Colonic mucosa (tissue), 4 donors: ENCODE measurements at regions of chr22 and their contacts with region 1.

Region 1: DNA sequence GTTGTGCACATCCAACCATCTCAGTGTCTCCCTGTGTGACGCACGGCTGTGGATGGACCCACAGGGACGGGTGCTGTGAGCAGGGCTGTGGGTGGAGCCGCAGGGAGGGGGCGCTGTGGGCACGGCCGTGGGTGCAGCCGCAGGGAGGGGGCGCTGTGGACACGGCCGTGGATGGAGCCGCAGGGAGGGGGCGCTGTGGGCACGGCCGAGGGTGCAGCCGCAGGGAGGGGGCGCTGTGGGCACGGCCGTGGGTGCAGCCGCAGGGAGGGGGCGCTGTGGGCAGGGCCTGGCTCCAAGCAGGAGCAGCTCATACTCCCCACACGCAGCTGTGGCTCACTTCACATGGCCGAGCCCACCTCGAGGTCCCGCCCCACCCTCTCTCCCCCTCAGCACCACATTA is 6.0 kb upstream of the MAPK11 start:
- DNase-seq: peak; percentile 74
- H3K4me3 ChIP-seq: no peak overlapping the region
- H3K27ac ChIP-seq: no peak overlapping the region
- H3K4me1 ChIP-seq: peaks cover 8% of the 10 kb centered on the region
- H3K27me3 ChIP-seq: peaks cover 8% of the 10 kb centered on the region
- CTCF ChIP-seq: peak; percentile 71

Region 2: DNA sequence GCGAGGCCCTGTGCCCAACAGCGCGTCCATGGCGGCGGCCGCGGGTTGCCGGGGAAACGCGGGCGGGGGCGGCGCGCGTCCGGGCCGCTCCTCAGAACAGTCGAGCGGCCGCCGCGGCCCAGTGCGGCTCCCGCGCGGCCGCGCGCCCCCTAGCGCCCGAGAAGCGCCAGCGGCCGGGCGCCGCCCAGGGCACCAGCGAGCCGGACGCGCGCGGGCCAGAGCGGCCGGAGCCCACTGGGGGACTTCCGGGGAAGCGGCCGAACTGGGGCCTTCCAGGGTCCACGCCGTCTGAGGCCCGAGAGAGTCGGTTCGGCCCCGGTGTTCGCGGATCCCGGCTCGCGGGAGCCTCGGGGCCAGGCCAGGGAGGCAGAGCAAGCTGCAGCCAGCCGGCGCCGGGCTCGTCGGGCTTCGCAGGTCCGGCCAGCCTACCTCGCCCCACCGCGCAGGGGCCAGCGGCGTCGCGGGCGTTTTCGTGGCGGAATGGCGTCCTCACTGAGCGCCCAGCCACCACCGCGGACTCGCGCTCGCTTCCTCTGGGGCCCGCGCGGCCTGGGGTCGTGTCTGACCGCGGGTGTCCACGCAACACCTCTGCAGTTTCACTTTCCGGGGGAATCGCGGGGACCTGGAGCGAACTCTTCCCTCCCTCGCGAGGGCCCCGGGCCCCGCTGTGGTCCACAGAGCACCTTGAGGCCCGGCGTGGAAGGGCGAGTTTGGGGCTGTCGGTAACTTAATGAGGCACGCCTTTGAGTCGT is 51.0 kb after region 1 on chr22 and contains the start of gene DENND6B:
- intact Hi-C with region 1: loop called (anchors 2 kb)
- DNase-seq: peak; percentile 80
- H3K4me3 ChIP-seq: peak within 1 kb of the TSS; percentile 73
- H3K27ac ChIP-seq: peak within 1 kb of the TSS; percentile 87
- H3K4me1 ChIP-seq: peaks cover 3% of the 10 kb centered on the region
- H3K27me3 ChIP-seq: no peaks in the 10 kb centered on the region
- CTCF ChIP-seq: peak; percentile 41
- total RNA-seq, gene DENND6B: 2.4 to 4.0 TPM

Region 3: DNA sequence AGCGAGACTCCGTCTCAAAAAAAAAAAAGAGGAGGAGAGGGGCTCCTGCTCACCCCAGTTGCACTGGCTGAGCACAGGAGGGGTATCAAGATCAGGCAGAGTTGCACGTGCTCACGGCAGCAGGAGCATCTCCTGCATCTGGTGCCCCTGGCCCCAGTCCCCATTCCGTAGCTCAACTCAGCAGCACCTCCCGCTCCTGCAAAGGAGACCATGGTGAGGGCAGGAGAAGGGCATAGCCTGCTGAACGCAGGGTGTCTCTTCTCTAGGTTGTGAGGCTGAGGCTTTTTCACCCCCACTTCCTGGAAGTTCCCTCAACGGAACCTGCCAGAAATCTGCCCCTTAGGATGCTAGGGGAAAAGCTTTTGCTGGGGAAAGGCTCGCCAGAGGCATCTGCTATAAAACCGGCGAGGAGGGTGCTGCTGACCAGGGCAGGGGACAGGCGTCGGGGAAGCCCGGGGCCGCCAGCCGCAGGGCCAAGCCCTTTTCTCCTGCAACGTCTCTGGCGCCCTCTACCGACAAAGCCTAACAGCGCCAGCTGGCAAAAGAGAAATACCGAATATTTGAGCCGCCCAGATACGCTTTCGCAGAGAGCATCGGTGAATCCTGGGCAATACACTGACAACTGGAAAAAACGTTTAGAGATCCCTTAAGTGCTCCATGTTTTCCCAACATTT is 66.0 kb after region 1 on chr22:
- intact Hi-C with region 1: loop called (anchors 5 kb)
- DNase-seq: peak; percentile 94
- H3K4me3 ChIP-seq: peak overlapping the region; percentile 75
- H3K27ac ChIP-seq: peak overlapping the region; percentile 86
- H3K4me1 ChIP-seq: no peaks in the 10 kb centered on the region
- H3K27me3 ChIP-seq: no peaks in the 10 kb centered on the region
- CTCF ChIP-seq: peak; percentile 98